ENCODE measurements at regions of chr2 and their contacts with region 1.

Region 1: GRCh38 chr2:132547074-132547687 is 122.8 kb downstream of the LYPD1 start:
- DNase-seq: peak; percentile 29 to 81
- H3K4me3 ChIP-seq: no peak overlapping the region
- H3K27ac ChIP-seq: no peak overlapping the region
- H3K4me1 ChIP-seq: peaks cover 0 to 5% (median 2%) of the 10 kb centered on the region in 4 experiments; a peak in 4 of 7 replicates
- H3K27me3 ChIP-seq: no peaks in the 10 kb centered on the region
- CTCF ChIP-seq: peak; percentile 16 to 74 (median 73)
- EP300 ChIP-seq: no peak
- POLR2A ChIP-seq: no peak
- RAD21 ChIP-seq: peak; percentile 86 to 90

Region 2: DNA sequence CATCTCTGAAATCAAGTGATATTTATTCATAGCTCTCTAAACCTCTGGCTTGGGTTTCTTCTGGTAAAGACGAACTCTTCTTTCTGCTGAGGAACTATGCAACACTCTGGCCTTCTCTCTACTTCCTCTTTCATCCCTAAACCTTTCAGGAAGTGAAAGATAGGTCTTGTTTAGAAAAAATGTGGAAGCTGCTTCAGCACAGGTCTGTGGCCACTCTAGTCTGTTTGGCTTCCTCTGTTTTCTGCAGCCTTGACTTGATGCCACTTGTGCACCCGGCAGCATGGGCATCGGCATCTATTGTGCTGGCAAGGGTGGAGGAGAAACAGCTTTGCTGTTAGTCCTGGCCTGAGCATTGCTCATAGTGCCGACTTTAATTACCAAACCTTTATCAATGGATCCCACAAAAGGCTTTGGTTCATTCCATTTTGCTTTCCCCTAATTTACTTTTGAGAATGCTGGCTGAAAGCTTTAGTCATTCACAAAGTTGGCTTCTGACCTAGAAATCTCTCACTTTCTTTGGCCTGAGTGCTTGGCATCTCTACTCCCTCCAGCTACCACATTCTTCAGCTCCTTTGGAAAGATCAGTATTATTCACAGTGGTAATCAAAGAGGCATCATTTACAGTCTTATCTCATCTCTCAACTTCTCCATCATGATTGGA is 162.6 kb before region 1 on chr2:
- CTCF ChIA-PET with region 1: no interaction called
- POLR2A ChIA-PET with region 1: no interaction called
- DNase-seq: no peak
- H3K4me3 ChIP-seq: no peak overlapping the region
- H3K27ac ChIP-seq: no peak overlapping the region
- H3K4me1 ChIP-seq: no peaks in the 10 kb centered on the region
- H3K27me3 ChIP-seq: no peaks in the 10 kb centered on the region
- CTCF ChIP-seq: no peak
- EP300 ChIP-seq: no peak
- POLR2A ChIP-seq: no peak
- RAD21 ChIP-seq: no peak

Region 3: GRCh38 chr2:132477962-132478361 is 69.2 kb before region 1 on chr2:
- CTCF ChIA-PET with region 1: no interaction called
- POLR2A ChIA-PET with region 1: no interaction called
- DNase-seq: no peak
- H3K4me3 ChIP-seq: no peak overlapping the region
- H3K27ac ChIP-seq: no peak overlapping the region
- H3K4me1 ChIP-seq: no peaks in the 10 kb centered on the region
- H3K27me3 ChIP-seq: no peaks in the 10 kb centered on the region
- CTCF ChIP-seq: no peak
- EP300 ChIP-seq: no peak
- POLR2A ChIP-seq: no peak
- RAD21 ChIP-seq: no peak

Region 4: DNA sequence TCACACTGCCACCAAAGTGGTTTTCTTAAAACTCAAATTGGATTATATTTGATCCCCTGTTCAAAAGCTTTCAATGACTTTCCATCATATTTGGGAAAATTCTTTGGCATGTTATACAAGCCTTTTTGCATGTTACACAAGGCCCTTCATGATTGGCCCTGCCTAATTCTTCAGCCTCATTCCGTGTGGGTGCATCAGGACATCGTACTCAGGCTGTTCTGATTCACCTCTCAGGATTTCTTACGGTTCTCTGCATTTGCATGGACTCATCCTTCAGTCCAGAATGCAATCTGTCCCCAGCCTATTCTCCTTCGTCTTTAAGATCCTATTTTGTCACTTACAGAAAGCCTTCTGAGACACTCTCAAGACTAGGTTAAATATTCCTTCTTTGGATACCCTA is 15.1 kb after region 1 on chr2:
- CTCF ChIA-PET with region 1: interaction called, 13 read pairs
- POLR2A ChIA-PET with region 1: no interaction called
- DNase-seq: no peak
- H3K4me3 ChIP-seq: no peak overlapping the region
- H3K27ac ChIP-seq: no peak overlapping the region
- H3K4me1 ChIP-seq: peaks cover 0 to 3% (median under 1%) of the 10 kb centered on the region in 4 experiments; a peak in 2 of 7 replicates
- H3K27me3 ChIP-seq: no peaks in the 10 kb centered on the region
- CTCF ChIP-seq: no peak
- EP300 ChIP-seq: no peak
- POLR2A ChIP-seq: no peak
- RAD21 ChIP-seq: no peak

Region 5: DNA sequence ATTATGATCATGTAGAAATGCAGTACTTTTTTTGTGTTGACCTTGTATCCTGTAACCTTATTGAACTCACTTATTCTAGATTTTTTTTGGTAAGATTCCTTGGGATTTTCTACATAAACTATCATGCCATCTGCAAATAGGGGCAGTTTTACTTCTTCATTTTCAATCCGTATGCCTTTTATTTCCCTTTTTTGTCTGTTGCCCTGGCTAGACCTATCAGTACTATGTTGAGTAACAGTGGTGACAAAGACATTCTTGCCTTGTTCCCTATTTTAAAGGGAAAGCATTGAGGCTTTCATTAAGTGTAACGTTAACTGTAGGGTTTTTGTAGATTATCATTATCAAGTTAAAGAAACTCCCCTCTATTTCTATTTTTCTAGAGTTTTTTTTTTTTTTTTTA is 30.5 kb after region 1 on chr2:
- CTCF ChIA-PET with region 1: no interaction called
- POLR2A ChIA-PET with region 1: no interaction called
- DNase-seq: no peak
- H3K4me3 ChIP-seq: no peak overlapping the region
- H3K27ac ChIP-seq: no peak overlapping the region
- H3K4me1 ChIP-seq: peaks cover 4 to 9% (median 7%) of the 10 kb centered on the region in 4 experiments
- H3K27me3 ChIP-seq: no peaks in the 10 kb centered on the region
- CTCF ChIP-seq: no peak
- EP300 ChIP-seq: no peak
- POLR2A ChIP-seq: no peak
- RAD21 ChIP-seq: no peak

Measured in H1 (cell line).